ENCODE measurements at regions of chr21 and their contacts with region 1.

Region 1: GRCh38 chr21:36260030-36260787 is 59.8 kb upstream of the MORC3 start:
- DNase-seq: peak; percentile 73
- ATAC-seq: peak; percentile 98
- H3K4me3 ChIP-seq: peak overlapping the region; percentile 93
- H3K27ac ChIP-seq: peak overlapping the region; percentile 65
- H3K4me1 ChIP-seq: no peaks in the 10 kb centered on the region
- H3K27me3 ChIP-seq: no peaks in the 10 kb centered on the region
- CTCF ChIP-seq: peak; percentile 68
- POLR2A ChIP-seq: no peak
- RAD21 ChIP-seq: peak; percentile 26

Region 2: GRCh38 chr21:34333150-34333739 is 1927.0 kb before region 1 on chr21:
- CTCF ChIA-PET with region 1: no interaction called
- POLR2A ChIA-PET with region 1: no interaction called
- dilution Hi-C with region 1: no loop called
- in situ Hi-C with region 1: no loop called
- intact Hi-C with region 1: no loop called
- DNase-seq: peak; percentile 25
- ATAC-seq: no peak
- H3K4me3 ChIP-seq: no peak overlapping the region
- H3K27ac ChIP-seq: no peak overlapping the region
- H3K4me1 ChIP-seq: peaks cover 34% of the 10 kb centered on the region
- H3K27me3 ChIP-seq: peaks cover 5% of the 10 kb centered on the region
- CTCF ChIP-seq: no peak
- POLR2A ChIP-seq: no peak
- RAD21 ChIP-seq: no peak

Region 3: GRCh38 chr21:36141513-36141925 is 118.7 kb before region 1 on chr21:
- CTCF ChIA-PET with region 1: no interaction called
- POLR2A ChIA-PET with region 1: interaction called, 10 read pairs
- dilution Hi-C with region 1: no loop called
- in situ Hi-C with region 1: no loop called
- intact Hi-C with region 1: no loop called
- DNase-seq: peak; percentile 89
- ATAC-seq: peak; percentile 84
- H3K4me3 ChIP-seq: no peak overlapping the region
- H3K27ac ChIP-seq: no peak overlapping the region
- H3K4me1 ChIP-seq: peaks cover 2% of the 10 kb centered on the region
- H3K27me3 ChIP-seq: no peaks in the 10 kb centered on the region
- CTCF ChIP-seq: peak; percentile 82
- POLR2A ChIP-seq: no peak
- RAD21 ChIP-seq: peak; percentile 85

Region 4: GRCh38 chr21:36156339-36156814 is 103.8 kb before region 1 on chr21:
- CTCF ChIA-PET with region 1: no interaction called
- POLR2A ChIA-PET with region 1: no interaction called
- dilution Hi-C with region 1: no loop called
- in situ Hi-C with region 1: no loop called
- intact Hi-C with region 1: loop called (anchors 1 kb)
- DNase-seq: peak; percentile 98
- ATAC-seq: peak; percentile 96
- H3K4me3 ChIP-seq: peak overlapping the region; percentile 88
- H3K27ac ChIP-seq: no peak overlapping the region
- H3K4me1 ChIP-seq: peaks cover 4% of the 10 kb centered on the region
- H3K27me3 ChIP-seq: no peaks in the 10 kb centered on the region
- CTCF ChIP-seq: no peak
- POLR2A ChIP-seq: no peak; the same call in 1 of the 2 replicates
- RAD21 ChIP-seq: no peak

Region 5: DNA sequence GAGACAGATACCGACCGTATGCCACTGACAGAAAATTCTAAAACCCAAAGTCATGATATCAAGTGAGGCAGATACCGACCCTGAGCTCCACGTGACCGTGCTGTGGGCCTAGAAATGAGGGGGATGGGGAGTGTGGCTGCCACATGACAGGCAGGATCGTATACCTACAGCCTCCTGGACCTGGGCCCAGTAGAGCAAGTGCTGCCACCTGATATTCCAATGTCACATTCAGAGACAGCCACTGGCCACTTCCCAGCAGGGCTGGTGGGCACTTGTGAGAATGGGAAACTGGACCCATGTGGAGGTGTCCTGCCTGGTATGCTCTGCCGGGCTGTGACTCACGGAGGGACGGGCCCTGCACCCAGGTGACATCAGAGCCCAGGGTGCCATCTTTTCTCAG is 264.3 kb after region 1 on chr21:
- CTCF ChIA-PET with region 1: no interaction called
- POLR2A ChIA-PET with region 1: no interaction called
- dilution Hi-C with region 1: no loop called
- in situ Hi-C with region 1: no loop called
- intact Hi-C with region 1: no loop called
- DNase-seq: no peak
- ATAC-seq: no peak
- H3K4me3 ChIP-seq: no peak overlapping the region
- H3K27ac ChIP-seq: no peak overlapping the region
- H3K4me1 ChIP-seq: no peaks in the 10 kb centered on the region
- H3K27me3 ChIP-seq: peaks cover 63% of the 10 kb centered on the region
- CTCF ChIP-seq: no peak
- POLR2A ChIP-seq: no peak
- RAD21 ChIP-seq: no peak